PC-9 (cell line): ENCODE measurements at regions of chr2 and their contacts with region 1.

Region 1: GRCh38 chr2:207632575-207633493 is 7.6 kb upstream of the METTL21A start:
- DNase-seq: peak; percentile 77 to 97
- H3K4me3 ChIP-seq: peak overlapping the region; percentile 28; the same call in 1 of the 2 replicates
- H3K27ac ChIP-seq: peak overlapping the region; percentile 96
- H3K4me1 ChIP-seq: peaks cover 50% of the 10 kb centered on the region
- H3K27me3 ChIP-seq: no peaks in the 10 kb centered on the region
- CTCF ChIP-seq: no peak

Region 2: GRCh38 chr2:207676827-207677354 is 44.1 kb after region 1 on chr2:
- CTCF ChIA-PET with region 1: no interaction called
- POLR2A ChIA-PET with region 1: no interaction called
- intact Hi-C with region 1: loop called (anchors 1 kb)
- DNase-seq: peak in 1 of 2 experiments; percentile 85
- H3K4me3 ChIP-seq: no peak overlapping the region
- H3K27ac ChIP-seq: peak overlapping the region; percentile 76
- H3K4me1 ChIP-seq: peaks cover 17% of the 10 kb centered on the region
- H3K27me3 ChIP-seq: no peaks in the 10 kb centered on the region
- CTCF ChIP-seq: no peak

Region 3: DNA sequence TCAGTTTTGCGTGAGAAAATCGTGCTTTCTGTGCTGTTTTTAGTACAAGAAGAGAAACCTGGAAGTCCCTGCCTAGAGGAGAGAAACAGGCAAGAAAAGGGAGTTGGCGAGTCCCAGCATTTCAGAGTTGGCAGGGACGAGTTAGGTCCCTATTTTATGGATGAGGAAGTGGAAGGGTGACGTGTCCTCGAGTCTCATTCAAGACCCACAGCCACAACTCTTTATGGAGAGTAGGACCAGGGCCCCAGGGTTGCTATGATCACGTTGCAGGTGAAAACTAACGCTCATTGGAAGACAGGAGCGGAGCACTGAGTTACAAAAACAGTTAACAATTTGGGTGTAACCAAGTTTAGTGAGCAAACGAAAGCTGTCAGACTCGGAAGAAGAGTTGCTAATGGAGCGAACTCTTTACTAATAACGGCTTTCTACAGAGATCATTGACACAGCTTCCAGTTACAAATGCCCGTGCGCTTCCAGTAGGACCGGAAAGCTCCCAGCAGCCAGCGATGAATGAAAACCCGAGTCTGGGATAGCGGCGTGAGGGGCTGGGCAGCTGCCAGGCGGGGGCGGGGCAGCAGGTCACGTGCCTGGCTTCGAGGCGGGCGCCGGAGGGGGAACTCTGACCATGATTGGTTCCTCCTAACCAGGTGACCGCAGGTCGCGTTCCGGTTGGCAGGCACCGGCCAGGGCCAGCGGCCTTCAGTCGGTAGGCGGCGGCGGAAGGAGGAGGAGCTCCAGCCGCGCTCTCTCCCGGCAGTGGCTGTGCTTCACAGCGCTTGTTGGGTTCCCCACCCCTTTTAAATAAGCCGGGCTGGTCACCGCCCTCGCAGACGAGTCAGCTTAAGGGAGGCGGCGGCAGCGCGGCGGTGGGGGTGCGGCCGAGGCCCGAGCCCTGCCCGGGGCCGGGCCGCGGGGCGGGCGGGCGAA is 78.2 kb after region 1 on chr2 and contains the start of gene CCNYL1:
- CTCF ChIA-PET with region 1: no interaction called
- POLR2A ChIA-PET with region 1: interaction called, 10 read pairs
- intact Hi-C with region 1: loop called (anchors 1 kb)
- DNase-seq: peak; percentile 94 to 97
- H3K4me3 ChIP-seq: peak within 1 kb of the TSS; percentile 99
- H3K27ac ChIP-seq: peak within 1 kb of the TSS; percentile 97
- H3K4me1 ChIP-seq: peaks cover 27% of the 10 kb centered on the region
- H3K27me3 ChIP-seq: no peaks in the 10 kb centered on the region
- CTCF ChIP-seq: no peak
- total RNA-seq, gene CCNYL1: 21.8 and 24.8 TPM in 2 replicates

Region 4: DNA sequence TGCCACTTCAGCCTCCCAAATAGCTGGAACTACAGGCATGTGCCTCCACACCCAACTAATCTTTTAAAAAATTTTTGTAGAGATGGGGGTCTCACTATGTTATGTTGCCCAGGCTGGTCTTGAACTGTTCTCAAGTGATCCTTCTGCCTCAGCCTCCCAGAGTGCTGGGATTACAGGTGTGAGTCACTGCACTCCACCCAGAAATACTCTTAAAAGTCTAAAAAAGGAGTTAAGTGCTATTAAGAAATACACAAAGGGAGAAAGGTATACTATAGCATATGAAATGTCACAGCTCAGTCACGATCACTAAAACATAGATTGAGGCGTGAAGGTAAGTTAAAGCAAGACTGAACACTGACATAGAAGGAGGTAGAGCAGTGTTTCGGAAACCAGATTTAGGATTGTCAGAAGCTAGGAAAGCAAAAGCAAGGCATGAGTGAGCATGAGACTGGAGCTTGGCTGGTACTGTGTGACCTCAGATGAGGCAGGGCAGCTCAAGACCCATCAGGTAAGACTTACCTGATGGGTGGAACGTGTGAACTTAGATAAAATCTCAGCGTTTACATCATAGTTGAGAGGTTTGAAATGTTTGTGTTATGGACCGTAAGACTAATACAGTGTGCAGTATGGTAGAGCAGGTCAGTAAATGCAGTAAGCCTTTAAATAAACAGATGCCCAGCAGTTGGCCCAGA is 87.8 kb after region 1 on chr2:
- CTCF ChIA-PET with region 1: interaction called, 12 read pairs
- POLR2A ChIA-PET with region 1: no interaction called
- intact Hi-C with region 1: loop called (anchors 1 kb)
- DNase-seq: peak; percentile 43 to 90
- H3K4me3 ChIP-seq: no peak overlapping the region
- H3K27ac ChIP-seq: peak overlapping the region; percentile 78
- H3K4me1 ChIP-seq: peaks cover 48% of the 10 kb centered on the region
- H3K27me3 ChIP-seq: no peaks in the 10 kb centered on the region
- CTCF ChIP-seq: no peak